Breast epithelium (tissue), 4 donors: ENCODE measurements at regions of chr12 and their contacts with region 1.

Region 1: DNA sequence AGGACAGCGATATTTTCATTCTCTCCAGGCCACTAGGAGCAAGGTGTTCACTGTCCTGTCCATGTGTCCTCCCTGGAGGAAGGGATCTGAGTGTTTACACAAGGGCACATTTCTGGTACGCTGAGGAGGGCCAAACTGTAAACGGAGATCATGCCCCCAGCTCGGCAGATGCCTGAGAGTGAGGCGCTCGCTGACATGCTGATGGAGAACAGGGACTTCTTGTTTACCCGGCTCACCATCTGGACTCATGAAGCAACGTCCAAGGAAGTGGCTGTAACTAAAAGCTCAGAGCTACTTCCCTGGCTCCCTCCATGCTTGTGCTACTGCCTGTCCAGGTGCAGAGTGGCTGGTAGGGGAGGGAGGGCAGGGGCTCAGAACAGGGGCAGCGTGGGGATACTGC is 43.4 kb upstream of the KCNA1 start:
- DNase-seq: no peak
- H3K4me3 ChIP-seq: no peak overlapping the region
- H3K27ac ChIP-seq: no peak overlapping the region
- H3K4me1 ChIP-seq: no peaks in the 10 kb centered on the region
- H3K27me3 ChIP-seq: peaks cover 0 to 9% of the 10 kb centered on the region in 2 donors
- CTCF ChIP-seq: no peak
- POLR2A ChIP-seq: no peak

Region 2: GRCh38 chr12:4954621-4955354 is 88.5 kb after region 1 on chr12:
- intact Hi-C with region 1: loop called (anchors 5 kb)
- DNase-seq: no peak
- H3K4me3 ChIP-seq: no peak overlapping the region
- H3K27ac ChIP-seq: no peak overlapping the region
- H3K4me1 ChIP-seq: no peaks in the 10 kb centered on the region
- H3K27me3 ChIP-seq: no peaks in the 10 kb centered on the region
- CTCF ChIP-seq: no peak
- POLR2A ChIP-seq: no peak